AG04449 (cell line): ENCODE measurements at regions of chr5 and their contacts with region 1.

Region 1: DNA sequence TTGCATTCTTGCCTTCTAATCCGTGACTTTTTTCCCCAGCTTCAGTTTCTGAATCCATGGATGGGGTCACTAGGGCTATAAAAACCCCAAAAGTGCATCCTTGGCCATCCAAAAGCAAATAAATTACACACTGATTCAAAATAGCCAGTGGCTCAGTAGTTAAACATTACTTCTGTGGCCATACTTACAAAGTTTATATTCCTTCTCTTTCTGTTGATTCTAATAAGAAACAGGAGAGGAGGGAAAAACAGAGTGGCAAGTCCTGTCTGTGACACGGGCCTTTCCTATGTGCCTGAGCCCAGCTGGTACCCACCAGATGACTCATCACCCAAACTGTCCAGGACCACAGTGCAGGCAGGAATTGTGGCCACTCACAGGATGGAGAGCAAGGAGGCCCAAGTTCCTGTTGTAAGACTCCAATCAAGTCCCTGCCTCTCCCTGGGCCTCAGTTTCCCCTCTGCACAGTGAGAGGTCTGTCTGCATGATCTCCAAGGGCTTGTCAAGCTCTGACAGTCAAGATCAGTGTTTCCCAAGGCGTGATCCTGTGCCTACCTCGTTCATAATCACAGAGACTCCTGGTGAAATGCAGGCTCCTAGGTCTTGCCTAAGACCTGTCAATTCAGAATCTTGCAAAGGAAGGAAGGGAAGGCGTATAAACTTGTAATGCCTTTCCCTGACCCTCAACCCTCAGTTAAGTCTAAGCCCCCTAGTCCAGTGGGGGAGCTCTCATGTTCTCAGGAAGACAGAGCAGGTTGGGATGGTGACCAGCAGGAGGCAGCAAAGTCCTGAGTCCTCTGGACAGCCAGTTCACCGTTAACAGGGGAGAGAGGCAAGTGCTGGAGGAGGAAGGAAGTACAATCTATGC is 29.5 kb downstream of the TNIP1 start:
- DNase-seq: no peak
- H3K4me3 ChIP-seq: no peak overlapping the region
- CTCF ChIP-seq: peak; percentile 85

Region 2: GRCh38 chr5:151002250-151002649 is 49.0 kb before region 1 on chr5:
- CTCF ChIA-PET with region 1: interaction called, 10 read pairs
- POLR2A ChIA-PET with region 1: no interaction called
- DNase-seq: no peak
- H3K4me3 ChIP-seq: no peak overlapping the region
- CTCF ChIP-seq: peak; percentile 2

Region 3: GRCh38 chr5:151037561-151038411 is 13.5 kb before region 1 on chr5:
- CTCF ChIA-PET with region 1: interaction called, 229 read pairs
- POLR2A ChIA-PET with region 1: interaction called, 4 read pairs
- DNase-seq: no peak
- H3K4me3 ChIP-seq: no peak overlapping the region
- CTCF ChIP-seq: no peak

Region 4: DNA sequence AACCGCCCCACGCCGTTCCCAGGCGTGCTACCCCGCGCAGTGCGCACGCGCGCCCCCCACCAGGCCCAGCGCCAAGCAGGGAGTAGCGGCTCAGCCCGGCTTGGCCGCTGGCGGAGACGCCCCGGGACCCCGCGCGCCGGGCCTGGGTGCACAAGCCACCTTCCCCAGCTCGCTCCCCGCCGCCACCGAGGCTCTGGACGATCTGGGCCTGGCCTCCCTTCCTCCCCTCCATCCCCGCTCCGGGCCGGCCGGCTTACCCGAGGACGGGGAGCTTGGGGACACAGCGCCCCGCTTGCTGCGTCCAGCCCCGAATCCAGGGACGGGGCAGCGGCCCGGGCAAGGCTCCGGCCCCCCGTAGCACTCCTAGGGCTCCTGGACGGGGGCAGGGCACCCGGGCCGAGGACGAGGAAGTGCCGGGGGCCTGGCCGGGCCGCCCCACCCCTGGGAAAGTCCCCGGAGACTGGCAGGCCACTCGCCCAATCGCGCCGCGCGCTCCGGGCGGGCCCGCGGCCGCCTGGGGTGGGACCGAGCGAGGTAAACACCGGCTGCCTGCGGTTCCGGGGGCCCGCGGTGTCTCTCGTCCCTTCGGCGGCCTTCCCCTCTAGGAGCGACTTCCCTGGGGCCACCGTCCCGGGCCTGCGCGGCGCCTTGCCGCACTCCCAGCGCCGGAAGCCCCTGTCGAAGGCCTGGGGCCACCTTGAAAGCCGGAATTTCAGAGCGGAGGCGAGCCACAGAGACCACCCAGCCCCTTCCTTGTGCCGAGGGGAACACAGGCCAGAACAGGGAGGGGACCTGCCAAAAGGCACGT is 29.5 kb after region 1 on chr5 and contains the start of gene TNIP1:
- CTCF ChIA-PET with region 1: interaction called, 317 read pairs
- POLR2A ChIA-PET with region 1: no interaction called
- DNase-seq: no peak
- H3K4me3 ChIP-seq: peak within 1 kb of the TSS; percentile 80
- CTCF ChIP-seq: no peak

Region 5: DNA sequence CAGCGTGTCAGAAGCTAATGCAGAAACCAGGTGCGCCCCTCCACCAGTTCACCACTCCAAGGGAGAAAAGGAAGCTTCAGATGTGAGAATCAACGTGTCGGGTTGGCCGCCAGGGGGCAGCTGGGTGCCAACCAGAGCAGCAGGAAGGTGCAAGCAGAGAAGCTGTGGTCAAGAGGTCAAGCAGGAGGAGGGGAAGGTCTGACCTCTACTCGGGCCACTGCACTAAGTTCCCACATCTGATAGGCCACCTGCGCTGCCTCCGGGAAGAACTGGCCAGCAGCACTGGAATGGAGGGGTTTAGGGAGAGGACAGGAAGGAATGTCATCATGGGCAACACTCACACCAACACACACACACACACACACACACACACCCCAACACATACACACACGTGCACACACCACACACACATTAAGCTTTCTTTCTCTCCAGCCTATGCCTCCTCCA is 74.9 kb after region 1 on chr5:
- CTCF ChIA-PET with region 1: interaction called, 1,128 read pairs
- POLR2A ChIA-PET with region 1: no interaction called
- DNase-seq: no peak
- H3K4me3 ChIP-seq: no peak overlapping the region
- CTCF ChIP-seq: peak; percentile 85

Region 6: GRCh38 chr5:151141535-151141934 is 90.2 kb after region 1 on chr5:
- CTCF ChIA-PET with region 1: interaction called, 10 read pairs
- POLR2A ChIA-PET with region 1: no interaction called
- DNase-seq: no peak
- H3K4me3 ChIP-seq: no peak overlapping the region
- CTCF ChIP-seq: no peak

Region 7: GRCh38 chr5:151157426-151158286 is 106.4 kb after region 1 on chr5 and contains the start of gene ANXA6:
- CTCF ChIA-PET with region 1: interaction called, 165 read pairs
- POLR2A ChIA-PET with region 1: no interaction called
- DNase-seq: no peak
- H3K4me3 ChIP-seq: peak within 1 kb of the TSS; percentile 91
- CTCF ChIP-seq: no peak